Lower lobe of right lung (tissue), 2 donors: ENCODE measurements at regions of chr12 and their contacts with region 1.

Region 1: DNA sequence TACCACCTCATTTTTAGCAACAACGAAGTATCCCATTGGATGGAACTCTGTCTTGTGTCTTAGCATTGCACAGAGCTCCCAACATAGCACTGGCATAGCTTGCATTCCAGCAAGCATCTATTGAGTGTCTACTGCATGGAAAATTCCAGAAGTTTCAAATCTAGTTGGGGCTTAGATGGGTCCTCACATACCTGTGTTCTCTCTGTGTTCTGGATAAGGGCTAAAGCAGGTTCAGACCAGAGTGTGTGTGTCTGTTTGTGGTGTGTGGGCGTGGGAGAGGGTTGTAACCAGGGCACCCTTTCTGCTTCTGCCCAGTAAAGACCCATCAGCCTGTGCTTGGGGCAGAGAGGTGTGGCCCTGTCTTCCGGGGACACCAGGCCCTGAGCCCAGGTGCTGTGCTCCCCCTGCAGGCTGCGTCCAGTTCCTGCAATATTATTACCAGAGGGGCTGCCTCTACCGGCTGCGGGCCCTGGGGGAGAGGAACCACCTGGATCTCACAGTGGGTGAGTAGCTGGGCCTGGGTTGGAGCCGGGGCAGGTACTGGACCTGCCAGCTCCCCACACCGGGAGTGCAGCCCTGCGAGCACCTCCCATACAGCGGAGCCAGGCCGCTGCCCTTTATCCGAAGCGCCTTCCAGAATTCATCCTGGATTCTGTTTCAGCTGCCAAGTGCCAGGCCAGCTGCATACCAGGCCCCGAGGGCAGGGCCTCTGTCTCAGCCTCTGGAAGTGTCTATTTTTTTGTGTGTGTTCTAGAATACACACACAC is 20.3 kb downstream of the RHOF start:
- DNase-seq: peak; percentile 87
- ATAC-seq: peak; percentile 82 to 86
- H3K4me3 ChIP-seq: no peak overlapping the region
- H3K27ac ChIP-seq: peak overlapping the region; percentile 71
- H3K4me1 ChIP-seq: peaks cover 14% of the 10 kb centered on the region
- H3K27me3 ChIP-seq: no peaks in the 10 kb centered on the region
- CTCF ChIP-seq: peak; percentile 79

Region 2: GRCh38 chr12:121697098-121697698 is 76.0 kb before region 1 on chr12:
- intact Hi-C with region 1: loop called (anchors 10 kb)
- DNase-seq: no peak
- ATAC-seq: no peak
- H3K4me3 ChIP-seq: peak overlapping the region; percentile 11
- H3K27ac ChIP-seq: no peak overlapping the region
- H3K4me1 ChIP-seq: peaks cover 17% of the 10 kb centered on the region
- H3K27me3 ChIP-seq: no peaks in the 10 kb centered on the region
- CTCF ChIP-seq: peak; percentile 68